GM10248 (cell line): ENCODE measurements at regions of chr1 and their contacts with region 1.

Region 1: DNA sequence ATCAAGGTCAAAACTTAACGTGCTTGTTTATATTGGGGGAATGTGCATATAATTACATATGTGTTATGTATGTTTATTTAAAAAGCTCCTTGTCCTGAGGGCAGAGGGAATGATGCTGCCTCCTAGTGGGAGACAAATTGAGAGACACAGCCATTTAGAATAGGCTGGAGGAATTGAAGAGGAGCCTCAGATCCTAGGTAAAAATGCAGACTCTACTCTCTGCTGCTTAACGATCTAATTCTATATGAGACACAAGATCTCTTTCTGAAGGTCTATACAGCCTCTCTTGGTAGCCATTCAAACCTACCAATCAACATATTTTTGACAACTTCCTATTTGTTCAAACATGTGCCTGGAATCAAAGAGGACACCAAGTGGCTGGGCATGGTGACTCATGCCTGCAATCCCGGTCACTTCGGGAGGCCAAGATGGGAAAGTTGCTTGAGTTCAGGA is 136.6 kb upstream of the ZNF648 start:
- DNase-seq: peak; percentile 17
- CTCF ChIP-seq: peak; percentile 34

Region 2: GRCh38 chr1:182134257-182134656 is 63.8 kb before region 1 on chr1:
- CTCF ChIA-PET with region 1: no interaction called
- POLR2A ChIA-PET with region 1: no interaction called
- DNase-seq: no peak
- CTCF ChIP-seq: no peak

Region 3: GRCh38 chr1:182185813-182186756 is 12.0 kb before region 1 on chr1:
- CTCF ChIA-PET with region 1: interaction called, 17 read pairs
- POLR2A ChIA-PET with region 1: no interaction called
- DNase-seq: no peak
- CTCF ChIP-seq: no peak